ENCODE measurements at regions of chr11 and their contacts with region 1.

Region 1: DNA sequence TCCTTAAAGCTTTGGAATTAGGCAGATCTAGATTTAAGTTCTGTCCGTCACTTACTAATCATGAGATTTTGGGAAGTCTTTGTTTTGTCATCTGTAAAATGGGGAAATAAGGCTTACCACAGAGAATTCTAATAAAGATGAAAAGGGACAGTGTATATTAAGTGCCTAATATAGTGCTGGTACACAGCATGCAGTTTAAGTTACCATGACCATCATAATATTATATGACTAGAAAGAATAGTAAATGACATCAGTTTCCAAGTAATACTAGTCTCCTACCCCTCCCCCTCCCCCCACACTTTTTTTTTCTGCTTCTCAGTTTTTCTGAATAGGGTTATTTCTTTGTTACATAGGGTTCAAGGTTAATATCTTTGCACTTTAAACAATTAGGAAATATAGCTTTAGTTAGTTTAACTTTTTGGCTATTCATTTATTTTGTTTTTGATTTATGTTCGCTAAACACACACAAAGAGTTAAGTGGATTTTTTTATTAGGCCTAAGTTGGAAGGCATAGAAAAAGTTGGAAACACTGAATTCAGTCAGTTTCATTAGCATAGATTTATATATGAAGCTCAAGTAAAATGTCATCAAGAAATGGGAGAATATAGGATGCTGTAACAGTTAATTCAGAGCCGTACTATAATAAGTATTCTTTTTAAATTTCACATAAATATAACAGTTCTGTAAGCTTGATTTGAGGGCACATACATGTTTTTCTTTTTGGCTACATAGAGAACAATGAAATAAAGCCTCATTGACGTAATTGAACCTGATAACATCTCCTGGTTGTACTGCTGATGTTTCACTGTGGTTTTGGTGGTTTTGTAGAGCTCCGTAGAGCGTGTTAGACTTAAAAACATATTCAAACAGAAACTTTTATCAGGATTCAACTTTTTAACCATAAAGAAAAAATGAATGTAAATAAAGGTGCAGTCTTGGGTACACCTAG is 121.2 kb downstream of the PDE3B start:
- DNase-seq: peak in 1 of 2 donors; percentile 94
- ATAC-seq: peak; percentile 84 to 99 (median 94)
- H3K4me3 ChIP-seq: no peak overlapping the region
- H3K4me3 Mint-ChIP-seq: peak overlapping the region; percentile 61
- H3K27ac ChIP-seq: peak overlapping the region; percentile 57
- H3K27ac Mint-ChIP-seq: peak overlapping the region; percentile 69 to 75
- H3K4me1 ChIP-seq: no peaks in the 10 kb centered on the region
- H3K4me1 Mint-ChIP-seq: peaks cover 8 to 12% of the 10 kb centered on the region in 2 donors
- H3K27me3 ChIP-seq: no peaks in the 10 kb centered on the region
- H3K27me3 Mint-ChIP-seq: no peaks in the 10 kb centered on the region
- CTCF ChIP-seq: no peak

Region 2: DNA sequence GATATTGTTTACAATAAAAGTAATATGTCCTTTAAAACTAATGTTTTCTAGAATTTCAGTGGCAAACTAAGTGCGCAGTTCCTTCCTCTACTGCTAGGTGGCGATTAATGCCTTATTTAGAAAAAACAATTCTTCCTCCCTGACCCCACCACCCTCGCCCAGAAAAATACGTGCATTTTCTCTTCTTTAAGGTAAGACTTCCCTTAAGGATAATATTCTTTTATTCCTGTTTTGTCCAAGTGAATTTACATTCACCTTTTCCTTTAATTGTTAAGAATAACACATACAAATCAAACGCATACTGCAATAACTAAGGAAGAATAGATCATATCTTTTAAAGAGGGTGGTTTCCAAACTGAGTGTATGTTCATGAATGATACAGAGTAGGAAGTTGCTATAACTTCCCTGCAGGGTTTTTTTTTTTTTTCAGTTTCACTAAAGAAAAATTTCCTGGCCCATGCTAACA is 227.7 kb before region 1 on chr11:
- intact Hi-C with region 1: loop called (anchors 2 kb)
- DNase-seq: peak in 1 of 2 donors; percentile 76
- ATAC-seq: peak; percentile 84 to 91 (median 86)
- H3K4me3 ChIP-seq: no peak overlapping the region
- H3K4me3 Mint-ChIP-seq: no peak overlapping the region
- H3K27ac ChIP-seq: no peak overlapping the region
- H3K27ac Mint-ChIP-seq: peak overlapping the region in 1 of 2 donors; percentile 76
- H3K4me1 ChIP-seq: no peaks in the 10 kb centered on the region
- H3K4me1 Mint-ChIP-seq: no peaks in the 10 kb centered on the region
- H3K27me3 ChIP-seq: no peaks in the 10 kb centered on the region
- H3K27me3 Mint-ChIP-seq: no peaks in the 10 kb centered on the region
- CTCF ChIP-seq: peak; percentile 91

Region 3: DNA sequence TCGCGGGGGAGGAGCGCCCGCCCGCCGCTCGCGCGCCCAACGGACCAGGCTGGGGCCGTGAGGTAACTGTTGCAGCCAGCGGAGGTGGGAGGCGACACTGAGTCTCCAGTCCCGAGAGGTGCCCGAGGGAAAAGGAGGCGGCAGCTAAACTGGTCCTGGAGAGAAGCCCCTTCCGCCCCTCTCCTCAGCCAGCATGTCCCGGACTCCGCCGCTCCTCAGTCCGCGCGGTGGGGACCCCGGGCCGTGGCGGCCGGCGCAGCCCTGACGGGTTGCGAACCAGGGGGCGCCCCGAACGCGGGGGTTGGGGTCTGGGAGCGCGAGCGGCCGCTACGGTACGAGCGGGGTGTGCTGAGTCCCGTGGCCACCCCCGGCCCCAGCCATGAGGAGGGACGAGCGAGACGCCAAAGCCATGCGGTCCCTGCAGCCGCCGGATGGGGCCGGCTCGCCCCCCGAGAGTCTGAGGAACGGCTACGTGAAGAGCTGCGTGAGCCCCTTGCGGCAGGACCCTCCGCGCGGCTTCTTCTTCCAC is 121.1 kb before region 1 on chr11 and contains the start of gene PDE3B:
- intact Hi-C with region 1: loop called (anchors 5 kb)
- DNase-seq: peak; percentile 66 to 83
- ATAC-seq: peak; percentile 79 to 88 (median 80)
- H3K4me3 ChIP-seq: peak within 1 kb of the TSS; percentile 87
- H3K4me3 Mint-ChIP-seq: peak within 1 kb of the TSS; percentile 81
- H3K27ac ChIP-seq: peak within 1 kb of the TSS; percentile 70
- H3K27ac Mint-ChIP-seq: peak within 1 kb of the TSS in 1 of 2 donors; percentile 86
- H3K4me1 ChIP-seq: peaks cover 12% of the 10 kb centered on the region
- H3K4me1 Mint-ChIP-seq: peaks cover 21 to 31% of the 10 kb centered on the region in 2 donors
- H3K27me3 ChIP-seq: peaks cover 35% of the 10 kb centered on the region
- H3K27me3 Mint-ChIP-seq: peaks cover 11 to 38% of the 10 kb centered on the region in 2 donors
- CTCF ChIP-seq: no peak
- total RNA-seq, gene PDE3B: 18.2 to 42.3 (median 34.5) TPM

Region 4: GRCh38 chr11:14784230-14784629 is 19.4 kb after region 1 on chr11:
- intact Hi-C with region 1: loop called (anchors 1 kb)
- DNase-seq: peak in 1 of 2 donors; percentile 34
- ATAC-seq: peak; percentile 85 to 95 (median 95)
- H3K4me3 ChIP-seq: no peak overlapping the region
- H3K4me3 Mint-ChIP-seq: peak overlapping the region; percentile 29
- H3K27ac ChIP-seq: peak overlapping the region; percentile 52
- H3K27ac Mint-ChIP-seq: peak overlapping the region; percentile 69 to 88
- H3K4me1 ChIP-seq: peaks cover 5% of the 10 kb centered on the region
- H3K4me1 Mint-ChIP-seq: peaks cover 14 to 16% of the 10 kb centered on the region in 2 donors
- H3K27me3 ChIP-seq: no peaks in the 10 kb centered on the region
- H3K27me3 Mint-ChIP-seq: no peaks in the 10 kb centered on the region
- CTCF ChIP-seq: no peak

Measured in natural killer cell (primary cell).